Motor neuron (in vitro differentiated cells): ENCODE measurements at regions of chr11 and their contacts with region 1.

Region 1: GRCh38 chr11:86608251-86608799 is 64.1 kb downstream of the ME3 start:
- ATAC-seq: peak in 4 of 8 experiments; percentile 29 to 88 (median 40)
- H3K4me3 ChIP-seq: no peak overlapping the region
- H3K27ac ChIP-seq: no peak overlapping the region
- H3K4me1 ChIP-seq: peaks cover 0 to 5% of the 10 kb centered on the region in 2 donors

Region 2: GRCh38 chr11:86483940-86484794 is 124.2 kb before region 1 on chr11:
- in situ Hi-C with region 1: no loop called
- ATAC-seq: peak; percentile 79 to 88 (median 87)
- H3K4me3 ChIP-seq: no peak overlapping the region
- H3K27ac ChIP-seq: peak overlapping the region in 1 of 2 donors; percentile 65
- H3K4me1 ChIP-seq: peaks cover 26 to 33% of the 10 kb centered on the region in 2 donors

Region 3: DNA sequence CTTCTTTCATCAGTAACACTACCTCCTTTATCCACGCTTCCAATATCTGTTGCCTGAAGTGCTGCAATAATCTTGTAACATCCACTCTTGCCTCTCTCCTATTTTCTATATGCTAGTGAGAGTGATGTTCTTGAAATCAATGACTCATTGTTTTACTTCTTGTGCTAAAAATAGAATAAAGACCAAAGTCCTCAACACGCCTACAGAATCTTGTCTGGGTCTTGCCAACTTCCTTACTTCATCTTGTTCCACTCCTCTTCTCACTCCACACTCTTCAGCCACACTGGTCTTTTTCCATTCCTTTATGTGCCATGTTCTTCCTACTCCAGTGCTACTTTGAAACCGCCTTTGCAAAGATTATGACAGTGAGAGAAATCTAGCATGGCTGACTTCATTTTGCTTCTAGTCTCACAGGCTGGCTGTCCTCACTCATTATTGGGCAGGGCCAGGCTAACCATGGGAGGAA is 97.2 kb before region 1 on chr11:
- in situ Hi-C with region 1: loop called in 1 of 9 experiments (anchors 25 kb)
- ATAC-seq: peak in 4 of 8 experiments; percentile 15 to 48 (median 40)
- H3K4me3 ChIP-seq: no peak overlapping the region
- H3K27ac ChIP-seq: no peak overlapping the region
- H3K4me1 ChIP-seq: peaks cover 0 to 5% of the 10 kb centered on the region in 2 donors